CD14-positive monocyte (primary cell): ENCODE measurements at regions of chr2 and their contacts with region 1.

Region 1: DNA sequence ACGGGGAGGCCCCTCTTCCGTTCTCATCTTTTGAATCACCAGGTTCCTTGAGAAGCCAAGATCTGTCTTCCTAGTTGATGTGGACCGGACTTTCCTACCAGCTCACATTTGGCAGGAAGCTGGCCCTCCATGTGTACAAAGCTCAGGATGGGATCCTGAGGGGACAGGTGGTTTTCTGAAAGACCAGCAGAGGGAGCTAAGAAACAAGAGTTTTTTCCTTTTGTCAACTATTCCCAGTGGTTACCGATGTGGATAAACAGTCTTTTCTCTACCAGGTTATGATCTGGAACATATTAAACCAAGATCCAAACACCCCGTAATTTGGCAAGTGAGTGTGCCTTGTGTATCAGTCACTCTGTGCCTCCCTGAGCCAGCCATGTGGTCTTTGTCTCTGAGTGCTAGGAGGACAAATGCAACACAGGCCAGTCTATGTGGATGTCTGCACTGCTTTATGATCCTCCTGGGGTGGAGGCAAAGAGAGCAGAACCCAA is 25.1 kb upstream of the ARHGAP25 start:
- DNase-seq: peak in 2 of 3 donors; percentile 60 to 73
- H3K4me3 ChIP-seq: no peak overlapping the region
- H3K4me3 Mint-ChIP-seq: peak overlapping the region in 1 of 2 donors; percentile 58
- H3K27ac ChIP-seq: no peak overlapping the region
- H3K27ac Mint-ChIP-seq: peak overlapping the region in 4 of 7 donors; percentile 34 to 68 (median 50)
- H3K4me1 ChIP-seq: peaks cover 14 to 21% of the 10 kb centered on the region in 2 donors
- H3K4me1 Mint-ChIP-seq: peaks cover 27% of the 10 kb centered on the region
- H3K27me3 ChIP-seq: no peaks in the 10 kb centered on the region
- H3K27me3 Mint-ChIP-seq: no peaks in the 10 kb centered on the region
- CTCF ChIP-seq: peak; percentile 89

Region 2: DNA sequence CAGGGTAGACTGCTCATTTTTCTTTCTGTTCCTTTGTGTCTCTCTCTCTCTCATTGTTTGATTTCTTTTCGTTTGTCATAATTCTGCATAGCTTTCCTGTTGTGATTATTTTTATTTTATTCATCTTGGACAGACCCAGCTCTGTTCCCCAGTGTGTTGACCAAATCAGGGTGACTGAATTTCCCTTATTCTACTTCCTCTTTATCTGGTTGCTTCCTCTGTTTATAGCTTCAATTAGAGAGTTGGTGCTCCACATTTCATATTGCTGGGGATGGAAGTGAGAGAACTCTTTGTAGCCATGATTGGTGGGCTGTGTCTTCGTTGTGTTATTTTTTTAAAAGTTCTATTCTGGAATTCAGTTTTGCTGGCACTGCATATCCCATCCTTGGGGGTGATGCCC is 47.0 kb before region 1 on chr2:
- intact Hi-C with region 1: no loop called
- DNase-seq: peak; percentile 45 to 66 (median 59)
- H3K4me3 ChIP-seq: no peak overlapping the region
- H3K4me3 Mint-ChIP-seq: peak overlapping the region in 1 of 2 donors; percentile 79
- H3K27ac ChIP-seq: no peak overlapping the region
- H3K27ac Mint-ChIP-seq: peak overlapping the region in 4 of 7 donors; percentile 13 to 70 (median 28)
- H3K4me1 ChIP-seq: peaks cover 14% of the 10 kb centered on the region in 2 donors
- H3K4me1 Mint-ChIP-seq: peaks cover 17% of the 10 kb centered on the region
- H3K27me3 ChIP-seq: no peaks in the 10 kb centered on the region
- H3K27me3 Mint-ChIP-seq: peaks cover 0 to 7% (median 2%) of the 10 kb centered on the region in 3 donors
- CTCF ChIP-seq: no peak

Region 3: GRCh38 chr2:68742626-68743415 is 33.4 kb after region 1 on chr2:
- intact Hi-C with region 1: loop called in 1 of 2 experiments (anchors 5 kb)
- DNase-seq: peak in 2 of 3 donors; percentile 62 to 65
- H3K4me3 ChIP-seq: peak overlapping the region; percentile 5 to 83 (median 64)
- H3K4me3 Mint-ChIP-seq: peak overlapping the region; percentile 29 to 84
- H3K27ac ChIP-seq: peak overlapping the region; percentile 79 to 96
- H3K27ac Mint-ChIP-seq: peak overlapping the region; percentile 98 to 100 (median 98)
- H3K4me1 ChIP-seq: peaks cover 98 to 100% of the 10 kb centered on the region in 2 donors
- H3K4me1 Mint-ChIP-seq: peaks cover 97% of the 10 kb centered on the region
- H3K27me3 ChIP-seq: no peaks in the 10 kb centered on the region
- H3K27me3 Mint-ChIP-seq: peaks cover 0 to 3% (median 2%) of the 10 kb centered on the region in 3 donors
- CTCF ChIP-seq: no peak

Region 4: GRCh38 chr2:68909793-68910674 is 200.6 kb after region 1 on chr2:
- intact Hi-C with region 1: loop called in 1 of 2 experiments (anchors 5 kb)
- DNase-seq: peak; percentile 60 to 75 (median 66)
- H3K4me3 ChIP-seq: no peak overlapping the region
- H3K4me3 Mint-ChIP-seq: no peak overlapping the region
- H3K27ac ChIP-seq: no peak overlapping the region
- H3K27ac Mint-ChIP-seq: no peak overlapping the region
- H3K4me1 ChIP-seq: peaks cover 28 to 31% of the 10 kb centered on the region in 2 donors
- H3K4me1 Mint-ChIP-seq: peaks cover 21% of the 10 kb centered on the region
- H3K27me3 ChIP-seq: no peaks in the 10 kb centered on the region
- H3K27me3 Mint-ChIP-seq: peaks cover 0 to 2% (median 0%) of the 10 kb centered on the region in 3 donors
- CTCF ChIP-seq: peak; percentile 95

Region 5: GRCh38 chr2:68925295-68925896 is 215.9 kb after region 1 on chr2:
- intact Hi-C with region 1: loop called (anchors 5 to 10 kb)
- DNase-seq: peak in 2 of 3 donors; percentile 53 to 56
- H3K4me3 ChIP-seq: no peak overlapping the region
- H3K4me3 Mint-ChIP-seq: no peak overlapping the region
- H3K27ac ChIP-seq: no peak overlapping the region
- H3K27ac Mint-ChIP-seq: no peak overlapping the region
- H3K4me1 ChIP-seq: no peaks in the 10 kb centered on the region
- H3K4me1 Mint-ChIP-seq: peaks cover 3% of the 10 kb centered on the region
- H3K27me3 ChIP-seq: no peaks in the 10 kb centered on the region
- H3K27me3 Mint-ChIP-seq: peaks cover 1 to 5% (median 3%) of the 10 kb centered on the region in 3 donors
- CTCF ChIP-seq: peak; percentile 97